Activated T-helper 2 cell treated with anti-CD3 and anti-CD28 coated beads, Interferon-gamma antibody, Interleukin-2, Interleukin-4, amounts not matched to agents 10 μg/mL and 5 μg/mL and 100 μg/mL, durations not matched to agents 14 hours and 24 hours and 36 hours (primary cell): ENCODE measurements at regions of chr2 and their contacts with region 1.

Region 1: GRCh38 chr2:127701193-127701650 is at the start of gene SFT2D3:
- DNase-seq: peak; percentile 93
- H3K4me3 Mint-ChIP-seq: peak within 1 kb of the TSS; percentile 89
- H3K27ac Mint-ChIP-seq: peak within 1 kb of the TSS; percentile 95
- H3K4me1 Mint-ChIP-seq: peaks cover 29% of the 10 kb centered on the region
- H3K27me3 Mint-ChIP-seq: no peaks in the 10 kb centered on the region
- total RNA-seq, gene SFT2D3: 4.5 and 5.9 TPM in 2 replicates

Region 2: DNA sequence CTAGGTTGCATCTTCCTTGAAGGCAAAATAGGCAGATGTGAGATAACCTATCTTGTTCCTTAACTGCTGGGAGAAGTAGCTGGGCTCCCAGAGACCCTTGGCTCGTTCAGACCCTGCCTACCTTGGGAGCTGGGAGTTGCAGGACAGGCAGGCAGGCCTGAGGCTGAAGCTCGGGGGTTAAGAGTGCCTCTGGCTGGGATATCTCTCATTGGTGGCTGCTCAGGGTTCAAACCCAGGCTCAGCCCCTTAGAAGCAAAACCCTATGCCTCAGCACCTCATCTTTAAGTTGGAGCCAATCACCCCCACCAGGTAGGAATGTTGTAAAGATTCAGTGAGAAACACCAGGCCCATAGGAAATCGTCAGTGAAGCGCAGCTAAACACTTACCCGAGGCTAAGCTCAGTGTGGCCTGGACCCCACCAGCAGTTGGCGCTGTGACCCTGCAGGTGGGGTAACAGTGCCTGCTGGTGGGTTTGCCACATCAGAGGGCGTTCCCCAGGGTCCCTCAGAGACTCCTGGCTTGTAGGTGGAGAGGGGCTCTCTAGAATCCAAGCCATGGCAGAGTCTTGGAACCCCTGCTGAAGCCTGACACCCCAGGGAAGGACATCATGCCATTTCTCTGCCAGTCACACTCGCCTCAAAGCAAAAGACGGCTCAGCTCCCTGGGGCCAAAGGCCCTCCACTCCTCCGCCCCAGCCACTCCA is 109.8 kb before region 1 on chr2:
- intact Hi-C with region 1: loop called (anchors 5 kb)
- DNase-seq: peak; percentile 36
- H3K4me3 Mint-ChIP-seq: no peak overlapping the region
- H3K27ac Mint-ChIP-seq: no peak overlapping the region
- H3K4me1 Mint-ChIP-seq: peaks cover 4% of the 10 kb centered on the region
- H3K27me3 Mint-ChIP-seq: no peaks in the 10 kb centered on the region

Region 3: DNA sequence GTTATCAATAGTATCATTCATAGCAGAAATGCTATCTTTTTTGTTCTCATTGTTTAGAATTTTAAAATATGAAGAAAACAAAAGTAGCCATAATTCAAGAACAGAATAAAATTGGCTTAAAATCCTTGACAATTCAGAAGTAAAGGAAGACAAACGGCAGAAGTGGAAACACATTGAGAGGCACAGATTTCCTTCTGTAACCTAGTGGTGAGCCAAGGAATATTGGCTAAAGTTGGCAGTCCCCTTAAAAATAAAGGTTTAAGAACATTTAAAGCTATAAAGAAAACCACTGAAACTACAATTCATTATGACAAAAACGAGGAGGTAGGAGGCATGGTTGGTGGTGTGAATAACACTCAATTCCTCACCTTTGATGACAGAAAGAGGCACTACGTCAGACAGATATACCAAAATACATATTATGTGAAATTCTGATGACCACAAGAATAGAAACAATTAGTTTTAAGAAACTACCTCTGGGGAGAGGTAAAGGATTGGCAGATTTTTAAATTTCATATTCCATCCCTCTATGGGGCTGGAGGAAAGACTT is 42.3 kb after region 1 on chr2:
- intact Hi-C with region 1: loop called (anchors 5 kb)
- DNase-seq: no peak
- H3K4me3 Mint-ChIP-seq: no peak overlapping the region
- H3K27ac Mint-ChIP-seq: no peak overlapping the region
- H3K4me1 Mint-ChIP-seq: peaks cover 36% of the 10 kb centered on the region
- H3K27me3 Mint-ChIP-seq: no peaks in the 10 kb centered on the region

Region 4: GRCh38 chr2:127857265-127857808 is 156.1 kb after region 1 on chr2:
- intact Hi-C with region 1: loop called (anchors 1 kb)
- DNase-seq: peak; percentile 13
- H3K4me3 Mint-ChIP-seq: peak overlapping the region; percentile 100
- H3K27ac Mint-ChIP-seq: peak overlapping the region; percentile 91
- H3K4me1 Mint-ChIP-seq: peaks cover 26% of the 10 kb centered on the region
- H3K27me3 Mint-ChIP-seq: no peaks in the 10 kb centered on the region

Region 5: DNA sequence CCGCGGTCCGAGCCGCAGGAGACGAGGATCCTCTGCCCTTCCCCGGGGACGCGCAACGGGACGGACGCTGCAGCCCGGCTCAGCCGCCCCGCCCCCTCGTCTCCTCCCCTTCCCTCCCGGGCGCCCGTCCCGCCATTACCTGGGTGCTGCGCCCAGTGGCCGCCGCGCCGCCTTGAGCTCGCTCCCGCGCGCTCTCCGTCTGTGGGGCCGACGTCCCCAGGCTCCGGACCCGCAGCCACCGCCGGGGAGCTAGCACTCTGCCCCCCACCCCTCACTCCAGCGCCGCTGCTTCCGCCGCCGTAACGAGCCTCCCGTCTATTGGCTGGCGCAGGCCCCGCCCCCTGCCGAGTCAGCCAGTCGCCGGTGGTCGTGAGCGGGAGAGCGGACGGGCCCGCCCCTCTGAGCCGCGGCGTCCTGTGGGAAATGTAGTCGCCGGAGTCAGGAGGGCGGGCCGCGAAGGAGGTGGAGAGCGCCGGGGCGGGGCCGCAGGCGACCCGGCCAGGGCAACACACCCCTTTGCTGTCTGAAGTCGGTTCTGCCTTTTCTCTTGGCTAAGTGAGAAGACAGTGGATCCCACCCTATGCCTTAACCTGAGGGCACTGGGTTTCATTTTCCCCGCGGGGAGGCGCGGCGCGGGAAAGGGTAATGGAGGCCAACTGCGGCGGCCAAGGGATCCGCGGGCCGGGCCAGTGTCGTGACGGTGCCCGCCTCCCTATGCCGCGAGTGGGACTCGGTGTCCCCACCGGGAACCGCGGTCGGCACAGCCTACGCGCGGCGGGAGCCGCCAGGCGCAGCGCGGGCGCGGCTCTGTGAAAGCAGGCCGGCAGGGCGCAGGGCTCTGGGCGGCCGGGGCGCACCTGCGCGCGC is 326.8 kb after region 1 on chr2 and contains the start of gene SAP130:
- intact Hi-C with region 1: loop called (anchors 1 kb)
- DNase-seq: peak; percentile 98
- H3K4me3 Mint-ChIP-seq: peak within 1 kb of the TSS; percentile 97
- H3K27ac Mint-ChIP-seq: peak within 1 kb of the TSS; percentile 85
- H3K4me1 Mint-ChIP-seq: peaks cover 12% of the 10 kb centered on the region
- H3K27me3 Mint-ChIP-seq: peaks cover 2% of the 10 kb centered on the region
- total RNA-seq, gene SAP130: 33.1 and 36.5 TPM in 2 replicates

Region 6: GRCh38 chr2:128090945-128091725 is 389.9 kb after region 1 on chr2 and contains the start of gene UGGT1:
- intact Hi-C with region 1: loop called (anchors 10 kb)
- DNase-seq: peak; percentile 93
- H3K4me3 Mint-ChIP-seq: peak within 1 kb of the TSS; percentile 94
- H3K27ac Mint-ChIP-seq: peak within 1 kb of the TSS; percentile 92
- H3K4me1 Mint-ChIP-seq: peaks cover 39% of the 10 kb centered on the region
- H3K27me3 Mint-ChIP-seq: no peaks in the 10 kb centered on the region
- total RNA-seq, gene UGGT1: 72.4 and 74.7 TPM in 2 replicates

Region 7: DNA sequence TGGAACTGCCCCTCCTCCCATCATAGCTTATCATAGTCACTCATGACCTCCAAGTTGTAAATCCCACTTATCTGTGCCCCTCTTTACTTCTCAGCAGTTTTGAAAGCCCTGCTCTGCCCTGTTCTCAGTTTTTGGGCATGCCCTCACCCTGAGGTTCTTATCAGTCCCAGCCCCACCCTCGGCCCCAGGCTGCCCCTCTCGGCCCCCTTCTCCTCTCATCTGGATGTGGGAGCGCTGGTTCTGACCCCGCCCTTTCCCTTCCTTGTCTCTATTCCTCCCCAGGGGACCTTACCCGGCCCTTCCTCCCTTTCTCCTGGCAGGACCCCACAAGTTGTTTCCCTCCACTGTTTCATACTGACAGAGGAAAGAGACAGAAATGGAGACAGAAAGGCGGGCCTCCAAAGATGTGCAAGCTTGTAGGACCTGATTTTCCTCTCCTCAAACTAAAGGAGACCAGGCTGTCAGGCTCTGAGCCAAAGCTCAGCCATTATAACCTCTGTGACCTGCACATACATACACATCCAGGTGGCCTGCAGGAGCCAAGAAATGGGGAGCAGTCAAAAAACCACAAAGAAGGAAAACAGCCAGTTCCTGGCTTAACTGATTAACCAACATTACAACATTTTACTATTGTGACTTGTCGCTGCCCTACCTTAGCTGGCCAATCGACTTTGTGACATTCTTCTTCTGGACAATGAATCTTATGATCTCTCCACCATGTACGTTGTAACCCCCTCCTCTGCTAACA is 788.5 kb after region 1 on chr2:
- intact Hi-C with region 1: no loop called
- DNase-seq: no peak
- H3K4me3 Mint-ChIP-seq: no peak overlapping the region
- H3K27ac Mint-ChIP-seq: no peak overlapping the region
- H3K4me1 Mint-ChIP-seq: peaks cover 19% of the 10 kb centered on the region
- H3K27me3 Mint-ChIP-seq: peaks cover 20% of the 10 kb centered on the region